Tibial artery (tissue), 4 donors: ENCODE measurements at regions of chr4 and their contacts with region 1.

Region 1: GRCh38 chr4:2948895-2949765 is 14.1 kb downstream of the NOP14 start:
- DNase-seq: no peak
- H3K4me3 ChIP-seq: no peak overlapping the region
- H3K27ac ChIP-seq: no peak overlapping the region
- H3K4me1 ChIP-seq: no peaks in the 10 kb centered on the region
- H3K27me3 ChIP-seq: no peaks in the 10 kb centered on the region
- CTCF ChIP-seq: no peak

Region 2: GRCh38 chr4:2689825-2690700 is 259.1 kb before region 1 on chr4:
- intact Hi-C with region 1: loop called (anchors 5 kb)
- DNase-seq: peak; percentile 40 to 75
- H3K4me3 ChIP-seq: no peak overlapping the region
- H3K27ac ChIP-seq: no peak overlapping the region
- H3K4me1 ChIP-seq: peaks cover 0 to 10% (median 8%) of the 10 kb centered on the region in 4 donors
- H3K27me3 ChIP-seq: no peaks in the 10 kb centered on the region
- CTCF ChIP-seq: no peak

Region 3: GRCh38 chr4:2867758-2868491 is 81.2 kb before region 1 on chr4:
- intact Hi-C with region 1: no loop called
- DNase-seq: peak in 1 of 2 donors; percentile 37
- H3K4me3 ChIP-seq: peak overlapping the region; percentile 10 to 34
- H3K27ac ChIP-seq: peak overlapping the region; percentile 13 to 24
- H3K4me1 ChIP-seq: peaks cover 0 to 89% (median 52%) of the 10 kb centered on the region in 4 donors
- H3K27me3 ChIP-seq: no peaks in the 10 kb centered on the region
- CTCF ChIP-seq: no peak

Region 4: DNA sequence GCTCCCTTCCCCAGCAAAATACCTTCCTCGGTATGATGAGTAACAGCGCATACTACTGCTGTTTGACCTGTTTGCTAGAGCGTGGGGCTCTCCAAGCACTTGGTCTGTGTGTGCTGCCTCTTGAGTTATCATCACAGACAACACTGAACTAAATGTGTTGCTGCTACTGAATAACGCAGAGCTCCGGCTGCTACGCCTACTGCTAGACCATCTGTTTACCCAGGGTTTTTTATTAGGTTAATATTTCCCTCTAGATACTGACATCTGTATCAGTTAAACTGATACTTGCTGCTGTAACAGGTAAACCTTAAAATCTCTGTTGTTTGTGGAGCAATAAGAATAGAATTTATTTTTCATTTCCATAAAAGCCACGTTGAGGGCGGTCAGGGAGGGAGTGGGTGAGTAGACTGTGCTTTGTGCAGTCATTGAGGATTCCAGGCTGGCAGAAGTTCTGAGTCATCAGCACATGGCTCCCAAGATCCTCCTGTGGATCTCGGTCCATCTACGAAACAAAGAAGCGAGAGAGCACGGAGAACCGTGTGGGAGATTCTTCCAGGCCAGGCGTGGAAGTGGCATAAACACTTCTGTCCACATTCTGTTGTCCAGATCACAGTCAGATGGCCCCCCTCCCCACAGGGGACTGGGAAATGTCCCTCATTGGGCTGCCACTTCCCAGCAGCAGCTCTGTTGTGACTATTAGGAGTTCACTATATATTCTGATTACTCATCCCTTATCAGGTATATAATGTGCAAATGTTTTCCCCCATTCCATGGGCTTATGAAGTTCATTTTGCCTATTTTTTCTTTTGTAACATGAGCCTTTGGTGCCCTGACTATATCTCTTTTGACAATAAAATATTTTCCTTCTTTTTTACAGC is 28.3 kb after region 1 on chr4:
- intact Hi-C with region 1: no loop called
- DNase-seq: no peak
- H3K4me3 ChIP-seq: no peak overlapping the region
- H3K27ac ChIP-seq: no peak overlapping the region
- H3K4me1 ChIP-seq: no peaks in the 10 kb centered on the region
- H3K27me3 ChIP-seq: no peaks in the 10 kb centered on the region
- CTCF ChIP-seq: no peak